ENCODE measurements at regions of chr13 and their contacts with region 1.

Region 1: DNA sequence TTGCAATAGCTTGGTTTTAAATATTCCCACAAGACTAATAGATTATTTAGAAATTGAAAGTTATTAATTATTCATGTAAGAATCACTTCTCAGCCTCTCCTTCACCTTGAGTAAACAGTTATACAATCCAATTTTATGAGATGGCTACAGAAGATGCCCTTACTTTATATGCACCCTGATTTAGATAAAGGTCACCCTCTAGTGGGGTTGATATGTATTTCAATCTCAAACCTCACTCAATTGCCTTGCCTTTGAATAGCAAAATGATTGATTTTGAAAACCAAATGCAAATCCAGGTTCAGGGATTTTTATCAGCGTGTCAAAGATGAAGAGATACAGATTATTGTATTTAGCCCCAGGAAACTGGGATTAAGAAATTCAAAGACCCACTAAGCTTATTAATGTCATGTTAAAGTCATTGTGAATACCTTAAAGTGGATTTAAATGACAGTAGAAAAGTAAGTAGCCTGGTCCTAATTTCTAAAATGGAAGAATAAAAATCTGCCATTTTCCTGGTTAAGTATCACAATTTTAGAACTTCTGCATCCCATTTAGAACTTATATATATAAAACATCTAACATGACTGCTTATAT is 305.1 kb downstream of the ITGBL1 start:
- DNase-seq: no peak
- ATAC-seq: peak in 3 of 4 donors; percentile 69 to 79 (median 74)
- H3K4me3 ChIP-seq: no peak overlapping the region
- H3K27ac ChIP-seq: no peak overlapping the region
- H3K4me1 ChIP-seq: peaks cover 0 to 5% (median 0%) of the 10 kb centered on the region in 3 donors
- H3K27me3 ChIP-seq: no peaks in the 10 kb centered on the region
- CTCF ChIP-seq: peak in 2 of 4 donors; percentile 24 to 39

Region 2: GRCh38 chr13:101514788-101515187 is 242.8 kb before region 1 on chr13:
- intact Hi-C with region 1: loop called in 1 of 3 experiments (anchors 5 kb)
- DNase-seq: peak in 1 of 6 donors; percentile 17
- ATAC-seq: peak in 3 of 4 donors; percentile 70 to 76 (median 76)
- H3K4me3 ChIP-seq: no peak overlapping the region
- H3K27ac ChIP-seq: no peak overlapping the region
- H3K4me1 ChIP-seq: no peaks in the 10 kb centered on the region
- H3K27me3 ChIP-seq: no peaks in the 10 kb centered on the region
- CTCF ChIP-seq: peak in 3 of 4 donors; percentile 20 to 58 (median 48)

Region 3: GRCh38 chr13:101520672-101521071 is 236.9 kb before region 1 on chr13:
- intact Hi-C with region 1: loop called in 2 of 3 experiments (anchors 5 to 10 kb)
- DNase-seq: no peak
- ATAC-seq: no peak
- H3K4me3 ChIP-seq: no peak overlapping the region
- H3K27ac ChIP-seq: no peak overlapping the region
- H3K4me1 ChIP-seq: no peaks in the 10 kb centered on the region
- H3K27me3 ChIP-seq: no peaks in the 10 kb centered on the region
- CTCF ChIP-seq: no peak

Measured in pancreas (tissue), 10 donors.